Astrocyte of the cerebellum (primary cell): ENCODE measurements at regions of chr1 and their contacts with region 1.

Region 1: DNA sequence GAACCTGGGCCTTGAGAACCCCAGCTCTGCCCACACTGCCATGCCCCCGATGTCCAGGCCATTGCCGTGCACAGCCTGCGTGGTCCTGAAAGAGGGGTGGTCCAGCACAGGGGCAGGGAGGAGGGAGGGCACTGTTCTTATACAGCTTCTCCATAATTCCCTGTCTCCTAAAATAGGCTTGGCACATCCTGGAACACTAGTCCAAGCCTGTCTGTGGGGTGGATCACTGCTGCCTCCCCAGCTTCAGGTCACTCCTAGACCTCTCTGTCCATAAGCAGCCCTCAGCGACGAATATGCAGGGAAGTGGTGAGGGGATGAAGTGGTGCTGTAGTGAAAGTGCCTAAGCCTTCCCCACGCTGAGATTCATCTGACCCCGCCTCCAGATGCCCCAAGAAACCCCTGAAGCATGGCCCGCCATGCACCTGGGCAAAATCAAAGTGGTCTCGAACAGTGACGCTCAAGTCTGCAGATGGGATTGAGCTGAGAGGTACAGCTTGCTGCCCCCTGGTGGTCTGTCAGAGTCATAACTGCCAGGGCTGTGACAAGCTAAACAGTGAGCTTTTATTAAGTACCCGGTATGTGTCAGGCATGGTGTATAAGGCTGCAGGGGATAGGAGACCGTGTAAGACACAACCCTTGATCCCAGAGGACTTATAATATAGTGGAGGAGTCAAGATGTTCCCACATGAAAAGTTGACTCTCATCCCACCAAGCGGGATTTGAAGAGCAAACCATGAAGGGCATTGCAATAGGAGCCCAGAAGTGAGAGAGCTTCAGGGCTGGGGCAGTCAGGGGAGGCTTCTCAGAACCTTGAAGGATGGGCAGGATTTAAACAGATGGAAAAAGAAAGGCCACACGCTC is 66.6 kb downstream of the FAM163A start:
- DNase-seq: no peak
- H3K4me3 ChIP-seq: no peak overlapping the region
- CTCF ChIP-seq: peak; percentile 95

Region 2: DNA sequence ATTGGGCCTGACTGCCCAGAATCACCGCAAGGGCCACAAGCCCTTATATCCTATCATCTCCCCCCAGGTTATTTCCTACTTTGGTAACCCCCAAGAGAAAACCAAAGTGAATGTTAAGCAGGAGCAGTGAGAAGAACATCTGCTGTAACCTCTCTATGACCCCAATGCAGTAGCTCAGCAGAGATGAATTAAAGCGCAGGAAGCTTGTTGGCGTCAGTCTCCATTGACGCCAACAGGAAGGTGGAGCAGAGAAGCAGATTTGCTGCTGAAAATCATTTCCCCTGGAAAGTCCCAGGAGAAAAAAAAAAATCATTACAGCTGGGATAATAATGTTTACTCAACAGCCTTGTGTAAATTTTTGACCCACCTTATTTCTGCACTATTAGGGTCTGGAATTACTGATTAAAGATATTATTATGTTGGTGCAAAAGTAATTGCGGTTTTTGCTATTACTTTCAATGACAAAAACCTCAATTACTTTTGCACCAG is 99.9 kb before region 1 on chr1:
- in situ Hi-C with region 1: loop called (anchors 5 kb)
- DNase-seq: no peak
- H3K4me3 ChIP-seq: no peak overlapping the region
- CTCF ChIP-seq: no peak